Cardiac septum (tissue), 1 donor: ENCODE measurements at regions of chr2 and their contacts with region 1.

Region 1: GRCh38 chr2:231662028-231662810 is 46.1 kb upstream of the PTMA start:
- DNase-seq: peak; percentile 99

Region 2: DNA sequence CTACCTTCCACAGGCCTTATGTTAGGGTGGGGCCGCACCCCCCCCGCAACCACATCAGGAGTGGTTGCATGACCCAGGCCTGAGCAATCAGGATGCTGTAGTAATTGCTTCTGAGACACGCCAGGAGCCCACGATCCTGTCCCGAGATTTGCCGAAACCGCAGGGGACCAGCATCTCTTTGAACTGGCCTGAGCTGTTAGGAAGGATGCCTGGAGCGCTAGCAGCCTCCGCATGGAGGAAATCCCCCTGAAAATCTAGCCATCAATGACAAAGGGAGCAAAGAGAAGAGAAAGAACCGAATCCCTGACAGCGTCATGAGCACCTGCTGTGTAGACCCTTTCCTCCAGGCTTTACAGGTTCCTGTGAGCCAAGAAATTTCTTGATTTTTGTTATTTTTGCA is 78.2 kb before region 1 on chr2:
- intact Hi-C with region 1: no loop called
- DNase-seq: no peak

Region 3: GRCh38 chr2:231612179-231613053 is 49.8 kb before region 1 on chr2:
- intact Hi-C with region 1: loop called (anchors 1 kb)
- DNase-seq: peak; percentile 94

Region 4: GRCh38 chr2:231720987-231721966 is 59.1 kb after region 1 on chr2:
- intact Hi-C with region 1: no loop called
- DNase-seq: peak; percentile 57